Activated CD4-positive, alpha-beta memory T cell treated with anti-CD3 and anti-CD28 coated beads, Interleukin-2, amount 10 ng/mL, durations not matched to agents 7 days and 5 days (primary cell): ENCODE measurements at regions of chr17 and their contacts with region 1.

Region 1: DNA sequence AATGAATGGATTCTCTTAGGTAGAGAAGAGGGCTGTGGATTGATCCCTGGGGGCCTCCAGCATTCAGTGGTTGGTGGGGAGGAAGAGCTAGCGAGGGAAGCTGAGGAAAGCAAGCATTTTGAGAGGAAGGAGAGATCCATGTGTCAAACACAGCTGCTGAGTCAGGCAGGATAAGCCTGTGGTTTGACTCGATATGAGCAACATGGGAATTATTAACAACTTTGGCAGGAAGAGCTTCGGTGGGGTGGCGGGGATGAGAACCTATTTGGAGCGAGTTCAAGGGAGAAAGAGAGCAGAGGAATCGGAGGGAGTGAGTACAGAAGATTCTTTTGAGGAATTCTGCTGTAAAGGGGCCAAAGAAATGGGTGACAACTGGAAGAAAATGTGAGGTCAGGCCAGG is 59.5 kb upstream of the CDC42EP4 start:
- DNase-seq: no peak
- H3K4me3 Mint-ChIP-seq: no peak overlapping the region
- H3K27ac Mint-ChIP-seq: no peak overlapping the region
- H3K4me1 Mint-ChIP-seq: no peaks in the 10 kb centered on the region
- H3K27me3 Mint-ChIP-seq: peaks cover 8% of the 10 kb centered on the region

Region 2: GRCh38 chr17:72985881-72986720 is 385.2 kb before region 1 on chr17:
- CTCF ChIA-PET with region 1: interaction called, 15 read pairs
- POLR2A ChIA-PET with region 1: no interaction called
- DNase-seq: peak; percentile 62
- H3K4me3 Mint-ChIP-seq: no peak overlapping the region
- H3K27ac Mint-ChIP-seq: no peak overlapping the region
- H3K4me1 Mint-ChIP-seq: peaks cover 1% of the 10 kb centered on the region
- H3K27me3 Mint-ChIP-seq: no peaks in the 10 kb centered on the region

Region 3: DNA sequence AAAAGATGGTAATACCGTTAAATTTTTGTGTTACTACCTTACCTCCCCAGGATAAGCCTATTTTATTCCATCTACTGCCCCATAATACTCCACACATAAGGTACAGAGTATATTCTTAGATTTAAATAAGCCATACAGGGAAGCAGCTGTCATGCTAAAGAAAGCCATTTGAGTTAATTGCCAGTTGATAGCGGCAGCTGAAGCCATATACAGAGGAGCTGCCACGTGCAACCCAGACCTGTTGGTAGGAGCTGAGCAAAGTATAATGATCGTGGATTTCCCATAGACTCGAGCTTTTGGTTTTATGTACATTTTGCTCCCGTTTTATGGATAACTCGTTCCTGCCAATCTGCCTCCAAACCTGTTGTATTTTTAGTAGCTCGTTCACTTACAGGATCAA is 121.6 kb before region 1 on chr17:
- CTCF ChIA-PET with region 1: interaction called, 102 read pairs
- POLR2A ChIA-PET with region 1: no interaction called
- DNase-seq: no peak
- H3K4me3 Mint-ChIP-seq: no peak overlapping the region
- H3K27ac Mint-ChIP-seq: no peak overlapping the region
- H3K4me1 Mint-ChIP-seq: no peaks in the 10 kb centered on the region
- H3K27me3 Mint-ChIP-seq: no peaks in the 10 kb centered on the region

Region 4: DNA sequence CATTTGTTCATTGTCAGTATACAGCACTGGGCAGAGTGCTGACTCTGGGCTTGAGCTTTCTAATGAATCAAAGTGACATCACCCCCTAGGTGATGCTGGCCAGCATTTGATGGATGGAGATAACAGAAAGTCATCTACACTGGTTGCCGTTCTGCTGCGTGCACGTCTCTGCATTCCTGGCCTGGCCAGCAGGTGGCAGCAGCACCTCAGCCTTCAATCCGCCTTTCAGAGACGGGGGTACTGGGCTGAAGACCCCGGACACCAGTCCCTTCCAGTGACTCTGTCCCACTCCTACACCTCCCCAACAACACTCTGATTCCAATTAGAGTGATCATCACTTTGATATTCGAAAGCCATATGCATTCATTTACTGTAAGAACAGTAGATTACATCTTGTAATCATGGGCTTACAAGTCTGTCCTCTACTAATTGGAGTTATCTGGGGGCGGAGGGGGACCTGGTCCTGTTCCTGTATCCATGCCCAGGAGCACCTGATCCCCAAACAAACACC is 115.6 kb before region 1 on chr17:
- CTCF ChIA-PET with region 1: interaction called, 102 read pairs
- POLR2A ChIA-PET with region 1: no interaction called
- DNase-seq: peak; percentile 62
- H3K4me3 Mint-ChIP-seq: no peak overlapping the region
- H3K27ac Mint-ChIP-seq: no peak overlapping the region
- H3K4me1 Mint-ChIP-seq: no peaks in the 10 kb centered on the region
- H3K27me3 Mint-ChIP-seq: no peaks in the 10 kb centered on the region

Region 5: GRCh38 chr17:73261617-73261951 is 109.7 kb before region 1 on chr17 and contains the start of gene CPSF4L:
- CTCF ChIA-PET with region 1: interaction called, 102 read pairs
- POLR2A ChIA-PET with region 1: no interaction called
- DNase-seq: no peak
- H3K4me3 Mint-ChIP-seq: no peak within 1 kb of the TSS
- H3K27ac Mint-ChIP-seq: no peak within 1 kb of the TSS
- H3K4me1 Mint-ChIP-seq: no peaks in the 10 kb centered on the region
- H3K27me3 Mint-ChIP-seq: peaks cover 2% of the 10 kb centered on the region
- total RNA-seq, gene CPSF4L: not detected

Region 6: DNA sequence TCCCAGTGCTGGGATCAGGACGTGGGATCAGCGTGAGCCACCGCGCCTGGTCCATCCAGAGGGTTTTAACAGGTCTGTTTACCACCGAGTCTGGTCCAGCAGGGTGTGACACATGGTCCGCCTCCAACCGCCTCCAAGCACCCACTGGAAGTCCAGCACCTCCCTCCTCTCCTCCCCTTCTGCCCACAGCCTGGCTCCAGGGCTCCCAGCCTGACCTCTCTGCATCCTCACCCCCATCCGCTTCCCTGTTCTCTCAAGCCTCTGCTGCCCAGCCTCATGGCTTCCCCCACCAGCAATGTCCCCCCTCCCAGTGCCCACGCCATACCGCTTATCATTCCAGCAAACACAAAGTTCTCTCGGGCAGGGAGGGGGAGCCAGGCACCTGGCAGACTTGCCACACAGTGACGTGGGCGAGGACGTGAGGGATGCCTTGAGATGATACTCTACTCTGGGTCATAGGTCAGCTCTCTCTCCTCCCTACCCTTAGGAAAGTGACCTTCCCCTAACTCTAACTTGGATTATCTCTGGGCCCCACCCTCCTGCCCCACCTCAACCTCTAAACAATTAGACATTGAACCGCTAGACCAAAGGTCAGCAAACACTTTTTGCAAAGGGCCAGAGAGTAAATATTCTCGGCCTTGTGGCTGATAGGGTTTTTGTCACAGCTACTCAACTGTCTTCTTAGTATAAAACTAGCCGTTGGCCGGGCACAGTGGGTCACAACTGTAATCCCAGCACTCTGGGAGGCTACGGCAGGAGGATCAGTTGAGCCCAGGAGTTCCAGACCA is 82.6 kb before region 1 on chr17:
- CTCF ChIA-PET with region 1: no interaction called
- POLR2A ChIA-PET with region 1: no interaction called
- DNase-seq: no peak
- H3K4me3 Mint-ChIP-seq: no peak overlapping the region
- H3K27ac Mint-ChIP-seq: no peak overlapping the region
- H3K4me1 Mint-ChIP-seq: peaks cover 31% of the 10 kb centered on the region
- H3K27me3 Mint-ChIP-seq: no peaks in the 10 kb centered on the region

Region 7: GRCh38 chr17:73340093-73340596 is 31.1 kb before region 1 on chr17:
- CTCF ChIA-PET with region 1: no interaction called
- POLR2A ChIA-PET with region 1: no interaction called
- DNase-seq: peak; percentile 16
- H3K4me3 Mint-ChIP-seq: no peak overlapping the region
- H3K27ac Mint-ChIP-seq: no peak overlapping the region
- H3K4me1 Mint-ChIP-seq: peaks cover 6% of the 10 kb centered on the region
- H3K27me3 Mint-ChIP-seq: no peaks in the 10 kb centered on the region

Region 8: GRCh38 chr17:73397856-73398540 is 26.7 kb after region 1 on chr17:
- CTCF ChIA-PET with region 1: no interaction called
- POLR2A ChIA-PET with region 1: no interaction called
- DNase-seq: no peak
- H3K4me3 Mint-ChIP-seq: no peak overlapping the region
- H3K27ac Mint-ChIP-seq: no peak overlapping the region
- H3K4me1 Mint-ChIP-seq: no peaks in the 10 kb centered on the region
- H3K27me3 Mint-ChIP-seq: no peaks in the 10 kb centered on the region

Region 9: GRCh38 chr17:73429440-73430164 is 58.3 kb after region 1 on chr17:
- CTCF ChIA-PET with region 1: no interaction called
- POLR2A ChIA-PET with region 1: no interaction called
- DNase-seq: peak; percentile 86
- H3K4me3 Mint-ChIP-seq: no peak overlapping the region
- H3K27ac Mint-ChIP-seq: no peak overlapping the region
- H3K4me1 Mint-ChIP-seq: peaks cover 14% of the 10 kb centered on the region
- H3K27me3 Mint-ChIP-seq: peaks cover 5% of the 10 kb centered on the region